ENCODE measurements at regions of chr6 and their contacts with region 1.

Region 1: DNA sequence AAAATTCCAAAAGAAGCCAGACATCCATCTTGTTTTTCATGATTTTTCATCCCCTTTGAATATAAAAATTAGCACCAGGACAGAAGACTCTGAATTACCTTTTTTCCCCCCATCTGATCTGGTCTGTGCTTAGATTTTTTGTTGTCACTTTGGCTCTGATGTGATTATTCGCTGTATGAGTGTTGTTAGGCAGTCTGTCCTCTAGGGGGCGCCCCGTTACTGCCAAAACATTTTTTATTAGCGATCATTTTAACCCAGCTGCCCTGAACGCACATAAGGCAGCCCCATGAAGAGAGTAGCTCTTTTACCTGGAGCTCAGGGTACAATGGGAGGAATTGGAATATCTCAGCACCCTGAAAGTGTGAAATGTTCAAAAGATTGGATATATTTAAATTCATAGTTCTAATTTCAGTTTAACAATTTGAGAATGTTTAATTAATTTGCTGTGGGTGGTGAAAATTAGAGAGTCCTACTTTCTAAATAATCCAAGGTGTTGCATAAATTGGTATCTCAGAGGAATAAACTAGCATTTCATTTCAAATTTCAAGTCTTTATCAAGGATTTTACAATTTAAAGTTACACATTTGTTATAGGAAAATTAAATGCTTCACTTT is 60.8 kb downstream of the PRPH2 start:
- DNase-seq: peak; percentile 89
- ATAC-seq: peak; percentile 89
- H3K4me3 Mint-ChIP-seq: no peak overlapping the region
- H3K27ac Mint-ChIP-seq: peak overlapping the region; percentile 5
- H3K4me1 Mint-ChIP-seq: peaks cover 4% of the 10 kb centered on the region
- H3K27me3 Mint-ChIP-seq: no peaks in the 10 kb centered on the region

Region 2: GRCh38 chr6:42692137-42692911 is 30.7 kb after region 1 on chr6:
- CTCF ChIA-PET with region 1: interaction called, 20 read pairs
- DNase-seq: no peak
- ATAC-seq: peak; percentile 31
- H3K4me3 Mint-ChIP-seq: no peak overlapping the region
- H3K27ac Mint-ChIP-seq: peak overlapping the region; percentile 59
- H3K4me1 Mint-ChIP-seq: peaks cover 36% of the 10 kb centered on the region
- H3K27me3 Mint-ChIP-seq: no peaks in the 10 kb centered on the region

Region 3: DNA sequence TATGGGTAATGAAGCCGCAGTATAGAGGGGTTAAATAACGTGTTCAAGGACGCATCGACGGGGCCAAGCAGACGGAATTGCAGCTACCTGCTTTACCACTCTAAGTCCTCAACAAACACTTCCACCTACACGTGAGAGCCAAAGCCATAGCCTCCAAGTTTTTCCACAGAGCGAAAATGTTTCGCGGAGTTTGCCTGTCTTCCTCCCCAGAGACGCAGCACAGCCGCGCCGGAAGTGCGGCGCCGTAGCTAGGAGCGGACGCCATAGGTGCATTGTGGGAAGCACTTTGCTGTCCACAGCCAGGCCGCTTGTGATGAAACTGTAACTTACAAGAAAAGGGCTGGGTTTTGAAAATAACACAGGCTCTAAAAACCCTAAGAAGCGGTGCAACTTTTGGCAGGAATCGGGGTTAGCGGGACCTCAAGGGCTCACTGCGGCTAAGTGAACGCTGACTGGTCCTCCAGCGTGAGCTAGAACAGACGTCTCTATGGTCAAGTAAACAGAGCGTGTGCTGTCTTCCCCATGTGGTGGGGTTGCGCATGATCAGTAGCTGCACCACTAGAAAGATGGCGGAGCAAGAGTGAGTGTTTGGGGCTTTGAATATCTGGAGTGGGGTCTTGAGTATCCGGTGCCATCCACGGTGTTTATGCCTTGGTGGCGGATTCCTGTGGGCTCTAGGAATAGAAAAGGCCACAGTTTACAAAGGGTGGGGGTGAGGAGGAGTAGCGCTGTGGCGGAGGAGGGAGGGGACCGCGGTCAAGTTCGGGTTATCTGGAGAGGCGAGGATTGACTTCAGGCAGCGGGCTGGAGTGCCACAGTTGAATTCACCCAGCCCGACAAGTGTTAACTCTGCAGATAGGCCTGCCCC is 218.0 kb after region 1 on chr6 and contains the start of gene RPL7L1:
- CTCF ChIA-PET with region 1: interaction called, 43 read pairs
- DNase-seq: peak; percentile 92
- ATAC-seq: peak; percentile 97
- H3K4me3 Mint-ChIP-seq: peak within 1 kb of the TSS; percentile 100
- H3K27ac Mint-ChIP-seq: peak within 1 kb of the TSS; percentile 100
- H3K4me1 Mint-ChIP-seq: peaks cover 22% of the 10 kb centered on the region
- H3K27me3 Mint-ChIP-seq: no peaks in the 10 kb centered on the region
- total RNA-seq, gene RPL7L1: 73.5 to 105 TPM

Measured in activated CD8-positive, alpha-beta memory T cell treated with anti-CD3 and anti-CD28 coated beads, Interleukin-2, amount 10 ng/mL, durations not matched to agents 7 days and 5 days (primary cell).